ENCODE measurements at regions of chr13 and their contacts with region 1.

Region 1: GRCh38 chr13:97004096-97004876 is 10.0 kb upstream of the OXGR1 start:
- DNase-seq: no peak
- CTCF ChIP-seq: no peak

Region 2: DNA sequence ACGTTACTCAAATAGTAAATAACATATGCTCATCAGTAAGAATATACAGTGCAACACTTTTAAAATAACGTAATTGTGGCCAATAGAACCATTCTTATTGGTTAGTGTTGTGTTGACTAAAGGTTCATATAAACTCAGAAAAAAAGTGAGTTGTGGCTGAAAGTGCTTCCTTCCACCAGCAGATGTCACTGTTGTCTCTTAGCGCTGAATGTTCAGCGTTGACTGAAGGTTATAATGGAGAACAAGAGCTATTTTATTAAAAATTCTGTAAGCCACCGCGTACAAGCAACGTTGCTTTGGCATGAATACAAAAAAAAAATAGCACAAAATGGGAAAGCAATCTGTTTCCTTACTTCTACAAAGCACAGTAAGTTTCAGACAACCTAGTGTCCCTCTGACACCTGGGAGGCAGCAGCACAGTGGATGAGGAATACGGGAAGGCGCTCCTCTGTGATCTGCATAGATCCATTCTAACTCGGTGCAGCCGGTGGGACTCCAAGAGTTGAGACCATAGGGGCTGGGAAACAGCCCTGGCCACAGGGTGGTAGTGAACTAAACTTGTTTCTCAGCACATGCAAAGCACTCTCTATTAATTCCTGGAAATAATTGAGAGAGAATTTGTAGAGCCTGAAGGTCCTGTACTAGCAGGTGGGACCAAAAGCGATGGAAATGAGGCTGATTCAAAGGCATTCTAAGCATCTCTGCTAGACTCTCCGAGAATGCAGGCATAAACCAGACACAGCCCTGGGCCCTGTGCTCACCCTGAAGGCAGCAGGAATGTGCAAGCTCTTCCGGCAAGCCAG is 13.9 kb after region 1 on chr13:
- CTCF ChIA-PET with region 1: interaction called, 27 read pairs
- POLR2A ChIA-PET with region 1: no interaction called
- DNase-seq: peak; percentile 35
- CTCF ChIP-seq: peak; percentile 83

Region 3: GRCh38 chr13:97124916-97125809 is 120.9 kb after region 1 on chr13:
- CTCF ChIA-PET with region 1: no interaction called
- POLR2A ChIA-PET with region 1: no interaction called
- DNase-seq: no peak
- CTCF ChIP-seq: no peak